ENCODE measurements at regions of chr3 and their contacts with region 1.

Region 1: DNA sequence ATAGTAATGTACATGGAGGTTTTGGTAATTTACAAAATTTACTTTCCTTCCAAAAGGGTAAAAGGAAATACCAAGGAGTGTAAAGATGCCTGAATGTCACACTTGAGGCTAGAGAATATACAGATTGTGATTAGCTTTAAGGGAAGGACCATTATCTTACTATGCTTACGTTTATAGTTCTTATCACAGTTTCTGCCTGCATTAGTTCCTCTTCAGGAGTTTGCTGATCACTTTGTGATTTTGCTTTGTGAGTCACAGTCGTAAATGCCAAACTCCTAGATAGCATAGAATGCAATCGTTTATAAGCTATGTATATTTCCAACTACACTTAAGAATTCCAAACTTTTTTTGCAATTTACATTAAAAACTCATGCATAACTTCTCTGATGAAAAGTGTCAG is 1034.6 kb downstream of the DIPK2A start:
- DNase-seq: no peak
- H3K4me3 ChIP-seq: no peak overlapping the region
- H3K27ac ChIP-seq: no peak overlapping the region
- H3K4me1 ChIP-seq: no peaks in the 10 kb centered on the region
- H3K27me3 ChIP-seq: no peaks in the 10 kb centered on the region
- CTCF ChIP-seq: no peak
- POLR2A ChIP-seq: no peak

Region 2: DNA sequence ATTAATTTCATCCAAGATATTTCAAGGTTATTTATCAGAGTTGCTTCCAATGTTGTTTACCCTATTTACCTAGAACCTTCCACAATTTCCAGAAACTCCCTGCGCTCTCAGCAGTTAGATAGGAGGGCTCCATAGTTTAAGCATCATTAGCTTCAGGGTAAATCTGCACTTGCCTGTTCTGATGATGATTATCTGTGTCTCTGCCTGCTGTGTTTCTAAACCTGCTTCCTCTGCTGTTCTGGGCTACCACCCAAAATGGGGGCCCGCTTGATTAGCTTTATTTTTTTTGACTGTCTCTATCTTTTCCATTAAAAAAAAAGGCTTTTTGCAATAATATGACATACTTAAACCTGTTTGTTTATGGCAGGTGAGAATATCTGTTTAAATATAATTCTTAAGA is 562.2 kb before region 1 on chr3:
- intact Hi-C with region 1: loop called (anchors 5 kb)
- DNase-seq: no peak
- H3K4me3 ChIP-seq: no peak overlapping the region
- H3K27ac ChIP-seq: no peak overlapping the region
- H3K4me1 ChIP-seq: no peaks in the 10 kb centered on the region
- H3K27me3 ChIP-seq: no peaks in the 10 kb centered on the region
- CTCF ChIP-seq: no peak
- POLR2A ChIP-seq: no peak

Region 3: DNA sequence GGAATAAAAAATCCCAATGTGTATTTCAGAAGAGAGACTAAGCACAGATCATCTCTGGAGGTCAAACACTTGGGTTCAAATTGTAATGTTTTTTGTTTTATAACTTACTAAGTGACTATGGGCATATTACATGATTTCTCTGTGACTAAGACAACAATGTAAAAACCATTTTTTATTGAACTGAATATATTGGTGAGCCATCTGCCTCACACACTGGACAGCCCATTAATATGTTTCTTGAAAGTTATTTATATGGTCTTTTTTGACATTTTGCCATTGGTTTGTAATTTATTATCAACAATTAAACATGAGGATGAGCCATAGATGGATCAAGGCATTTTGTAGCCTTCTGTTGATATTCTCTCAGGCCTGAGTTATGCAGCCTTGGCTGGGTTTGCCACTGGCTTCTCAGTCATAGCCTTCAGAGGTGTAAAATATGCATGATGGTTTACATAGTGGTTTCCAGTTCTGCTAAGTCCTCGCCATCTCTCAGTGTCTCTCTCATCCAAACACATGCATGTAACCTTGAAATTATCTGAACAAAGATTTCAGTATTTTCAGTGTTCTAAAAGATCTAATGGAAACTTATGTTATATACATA is 37.4 kb before region 1 on chr3:
- intact Hi-C with region 1: loop called (anchors 2 kb)
- DNase-seq: no peak
- H3K4me3 ChIP-seq: no peak overlapping the region
- H3K27ac ChIP-seq: no peak overlapping the region
- H3K4me1 ChIP-seq: no peaks in the 10 kb centered on the region
- H3K27me3 ChIP-seq: no peaks in the 10 kb centered on the region
- CTCF ChIP-seq: no peak
- POLR2A ChIP-seq: no peak

Measured in breast epithelium (tissue), 4 donors.